SK-N-SH (cell line): ENCODE measurements at regions of chr18 and their contacts with region 1.

Region 1: GRCh38 chr18:56869189-56869777 is 218.1 kb downstream of the WDR7 start:
- DNase-seq: peak; percentile 33
- H3K4me3 ChIP-seq: no peak overlapping the region
- H3K27ac ChIP-seq: no peak overlapping the region
- H3K4me1 ChIP-seq: peaks cover 0 to 4% of the 10 kb centered on the region in 2 experiments; a peak in 1 of 4 replicates
- H3K27me3 ChIP-seq: no peaks in the 10 kb centered on the region
- CTCF ChIP-seq: peak; percentile 89
- EP300 ChIP-seq: no peak
- RAD21 ChIP-seq: peak; percentile 88

Region 2: GRCh38 chr18:56402872-56403516 is 466.3 kb before region 1 on chr18:
- CTCF ChIA-PET with region 1: no interaction called
- POLR2A ChIA-PET with region 1: no interaction called
- DNase-seq: no peak
- H3K4me3 ChIP-seq: peak overlapping the region; percentile 14 to 33; a peak in 2 of 4 replicates
- H3K27ac ChIP-seq: peak overlapping the region; percentile 39 to 92; a peak in 3 of 4 replicates
- H3K4me1 ChIP-seq: peaks cover 6 to 10% of the 10 kb centered on the region in 2 experiments; a peak in 3 of 4 replicates
- H3K27me3 ChIP-seq: no peaks in the 10 kb centered on the region
- CTCF ChIP-seq: no peak
- EP300 ChIP-seq: 0 out of 4 replicates have a peak, but pooled peaks of 1 of the 2 experiments have one; percentile 46
- RAD21 ChIP-seq: no peak

Region 3: GRCh38 chr18:56851774-56852173 is 17.5 kb before region 1 on chr18:
- CTCF ChIA-PET with region 1: interaction called, 18 read pairs
- POLR2A ChIA-PET with region 1: no interaction called
- DNase-seq: no peak
- H3K4me3 ChIP-seq: no peak overlapping the region
- H3K27ac ChIP-seq: no peak overlapping the region
- H3K4me1 ChIP-seq: no peaks in the 10 kb centered on the region
- H3K27me3 ChIP-seq: no peaks in the 10 kb centered on the region
- CTCF ChIP-seq: no peak
- EP300 ChIP-seq: no peak
- RAD21 ChIP-seq: no peak

Region 4: GRCh38 chr18:56884511-56884910 is 15.2 kb after region 1 on chr18:
- CTCF ChIA-PET with region 1: interaction called, 13 read pairs
- POLR2A ChIA-PET with region 1: no interaction called
- DNase-seq: no peak
- H3K4me3 ChIP-seq: no peak overlapping the region
- H3K27ac ChIP-seq: no peak overlapping the region
- H3K4me1 ChIP-seq: no peaks in the 10 kb centered on the region; a peak in 1 of 4 replicates
- H3K27me3 ChIP-seq: no peaks in the 10 kb centered on the region
- CTCF ChIP-seq: no peak
- EP300 ChIP-seq: no peak
- RAD21 ChIP-seq: no peak

Region 5: GRCh38 chr18:56890632-56891031 is 21.3 kb after region 1 on chr18:
- CTCF ChIA-PET with region 1: interaction called, 10 read pairs
- POLR2A ChIA-PET with region 1: no interaction called
- DNase-seq: no peak
- H3K4me3 ChIP-seq: 0 out of 4 replicates have a peak overlapping the region, but pooled peaks of 1 of the 2 experiments have one; percentile 5
- H3K27ac ChIP-seq: peak overlapping the region; percentile 53 to 85; a peak in 3 of 4 replicates
- H3K4me1 ChIP-seq: peaks cover 0 to 21% of the 10 kb centered on the region in 2 experiments; a peak in 3 of 4 replicates
- H3K27me3 ChIP-seq: no peaks in the 10 kb centered on the region
- CTCF ChIP-seq: no peak
- EP300 ChIP-seq: peak in 1 of 2 experiments; percentile 88; a peak in 2 of 4 replicates
- RAD21 ChIP-seq: no peak

Region 6: DNA sequence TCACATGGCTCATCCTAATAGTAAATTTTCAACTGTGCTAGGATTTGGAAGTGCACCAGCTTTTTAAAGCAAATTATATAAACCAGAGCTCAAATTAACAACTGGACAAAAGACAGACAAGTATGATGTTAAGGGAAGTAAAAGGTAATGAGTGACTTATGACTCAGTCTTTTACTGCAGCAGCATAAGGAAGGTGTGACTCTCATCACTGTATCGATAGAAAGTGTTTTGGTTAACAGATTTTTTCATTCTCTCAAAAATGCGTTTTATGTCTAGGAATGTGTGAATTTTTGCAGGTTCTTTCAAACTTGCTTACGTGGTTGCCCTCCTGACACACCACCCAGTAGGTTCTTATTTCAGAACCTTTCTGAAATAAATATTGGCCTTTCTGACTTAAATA is 33.4 kb after region 1 on chr18:
- CTCF ChIA-PET with region 1: interaction called, 11 read pairs
- POLR2A ChIA-PET with region 1: no interaction called
- DNase-seq: no peak
- H3K4me3 ChIP-seq: no peak overlapping the region
- H3K27ac ChIP-seq: no peak overlapping the region
- H3K4me1 ChIP-seq: no peaks in the 10 kb centered on the region
- H3K27me3 ChIP-seq: no peaks in the 10 kb centered on the region
- CTCF ChIP-seq: no peak
- EP300 ChIP-seq: no peak
- RAD21 ChIP-seq: no peak

Region 7: DNA sequence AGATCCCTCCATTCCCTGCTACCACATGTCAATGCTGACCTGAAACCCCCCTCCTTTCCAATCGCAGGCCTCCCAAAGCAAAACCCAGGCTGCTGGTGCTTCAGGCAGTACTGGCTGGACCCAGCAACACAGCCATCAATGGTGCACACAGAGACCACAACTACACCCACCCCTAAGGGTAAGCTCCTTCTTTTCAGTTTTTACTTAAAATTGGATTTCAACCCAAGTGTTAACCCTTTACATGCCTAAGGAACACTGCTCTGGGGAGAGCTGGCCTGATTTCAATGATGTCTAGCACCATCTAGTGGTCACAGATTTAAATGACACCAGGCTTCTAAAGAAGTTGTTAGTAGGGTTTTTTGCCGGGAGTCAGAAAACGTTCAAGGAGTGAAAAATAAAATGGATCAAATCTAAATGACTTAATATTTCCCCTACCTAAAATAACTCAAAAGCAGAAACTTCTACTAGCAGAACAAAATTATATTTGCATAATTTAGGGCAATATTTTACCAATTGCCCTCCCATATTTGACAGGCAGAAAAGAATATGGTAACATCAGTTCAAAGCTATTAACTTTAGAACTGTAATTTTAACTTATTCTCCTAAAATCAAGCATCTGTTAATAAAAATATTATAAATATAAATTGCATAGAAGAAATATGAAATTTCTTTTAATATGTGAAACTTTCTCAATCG is 692.6 kb after region 1 on chr18:
- CTCF ChIA-PET with region 1: interaction called, 14 read pairs
- POLR2A ChIA-PET with region 1: no interaction called
- DNase-seq: peak; percentile 68
- H3K4me3 ChIP-seq: peak overlapping the region in 1 of 2 experiments; percentile 28; a peak in 1 of 4 replicates
- H3K27ac ChIP-seq: no peak overlapping the region
- H3K4me1 ChIP-seq: peaks cover 0 to 3% of the 10 kb centered on the region in 2 experiments; a peak in 1 of 4 replicates
- H3K27me3 ChIP-seq: no peaks in the 10 kb centered on the region
- CTCF ChIP-seq: peak; percentile 94
- EP300 ChIP-seq: no peak
- RAD21 ChIP-seq: peak; percentile 80